Gastrocnemius medialis (tissue), 4 donors: ENCODE measurements at regions of chr1 and their contacts with region 1.

Region 1: DNA sequence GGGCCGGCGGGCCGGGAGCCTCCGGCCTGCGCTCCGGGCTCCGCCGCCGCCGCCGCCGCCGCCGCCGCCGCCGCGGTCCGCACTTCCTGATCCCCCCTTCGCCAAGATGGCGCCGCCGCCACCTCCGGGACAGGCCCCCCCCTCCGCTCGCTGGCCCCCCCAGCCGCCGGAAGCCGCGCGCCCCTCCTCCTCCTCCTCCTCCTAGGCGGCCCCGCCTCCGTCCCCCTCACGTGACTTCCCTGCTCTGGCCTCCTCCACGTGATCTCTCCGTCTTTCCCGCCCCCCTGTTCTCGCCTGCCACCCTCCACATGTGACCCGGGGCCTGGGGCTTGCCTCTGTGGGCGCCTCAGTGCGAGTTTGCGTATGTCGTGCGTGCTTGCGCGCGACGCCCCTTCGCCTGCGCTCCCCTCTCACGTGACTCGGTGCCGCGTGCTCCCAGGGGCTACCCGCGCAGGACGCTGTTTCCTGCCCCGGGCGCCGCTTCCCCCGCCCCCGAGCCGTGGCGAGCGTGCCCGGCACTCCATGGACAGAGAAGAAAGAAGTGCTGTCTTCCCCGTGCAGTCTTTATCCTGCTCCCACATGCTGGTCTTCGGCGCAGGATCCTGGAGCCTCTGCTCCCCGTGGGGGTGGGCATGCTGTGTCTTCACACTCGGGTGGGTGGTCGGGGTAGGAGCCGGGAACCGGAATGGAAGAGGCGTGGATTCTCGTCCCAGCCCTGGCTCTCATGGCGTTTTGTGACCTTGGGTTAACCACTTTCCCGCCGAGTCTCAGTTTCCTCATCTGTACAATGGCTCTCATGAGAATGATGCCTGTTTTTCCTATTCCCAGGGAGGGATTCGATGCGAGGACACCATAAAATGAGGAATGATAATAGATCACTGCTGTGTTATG is at the start of gene UBE2Q1:
- DNase-seq: peak; percentile 100
- ATAC-seq: peak; percentile 87 to 89
- H3K4me3 ChIP-seq: peak within 1 kb of the TSS; percentile 66 to 90 (median 76)
- H3K27ac ChIP-seq: peak within 1 kb of the TSS; percentile 94 to 98 (median 97)
- H3K4me1 ChIP-seq: peaks cover 29 to 31% of the 10 kb centered on the region in 2 donors
- H3K27me3 ChIP-seq: no peaks in the 10 kb centered on the region
- CTCF ChIP-seq: peak in 1 of 5 experiments; percentile 35
- POLR2A ChIP-seq: peak; percentile 79 to 86
- total RNA-seq, gene UBE2Q1: 18.8 to 42.8 (median 24.1) TPM

Region 2: DNA sequence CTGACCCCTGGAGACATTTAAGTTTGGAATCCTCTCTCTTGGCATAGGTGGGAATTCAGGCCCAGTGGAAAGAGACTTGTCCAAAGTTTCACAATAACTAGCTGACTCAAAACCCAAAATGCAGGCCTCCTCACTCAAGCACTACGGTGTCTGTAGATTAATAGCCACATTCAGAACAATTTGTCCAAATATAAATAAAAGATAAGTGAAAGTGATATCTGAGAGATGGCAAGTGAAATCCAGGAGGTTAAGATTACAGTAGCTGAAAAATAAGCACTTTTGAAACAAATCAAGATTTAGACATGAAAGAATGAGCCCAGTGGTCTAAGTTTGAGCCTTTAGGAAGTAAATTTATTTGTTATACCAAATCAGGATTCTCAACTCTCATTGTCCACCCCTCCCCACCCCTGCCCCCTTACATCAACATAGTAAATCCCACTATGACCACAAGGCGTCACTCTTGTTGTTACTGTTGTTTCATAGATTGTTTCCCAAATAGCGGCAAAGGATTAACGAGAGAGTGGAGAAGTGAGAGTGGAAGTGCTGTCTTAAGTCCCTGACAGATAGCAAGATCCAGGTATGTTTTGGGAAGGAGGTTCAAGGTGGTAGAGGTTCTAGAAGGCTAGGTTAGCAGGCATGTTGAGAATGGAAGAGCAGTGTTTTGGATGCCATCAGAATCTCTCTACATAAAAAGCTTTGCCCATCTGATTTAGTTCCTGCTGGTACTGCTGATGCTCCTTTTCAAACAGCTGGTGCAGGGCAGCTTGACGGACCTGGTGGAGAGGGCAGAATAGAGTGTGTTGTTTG is 359.9 kb before region 1 on chr1:
- in situ Hi-C with region 1: no loop called
- intact Hi-C with region 1: loop called (anchors 10 kb)
- DNase-seq: no peak
- ATAC-seq: peak; percentile 50 to 59
- H3K4me3 ChIP-seq: no peak overlapping the region
- H3K27ac ChIP-seq: peak overlapping the region; percentile 86 to 93 (median 90)
- H3K4me1 ChIP-seq: peaks cover 7 to 13% of the 10 kb centered on the region in 2 donors
- H3K27me3 ChIP-seq: no peaks in the 10 kb centered on the region
- CTCF ChIP-seq: peak in 3 of 5 experiments; percentile 39 to 58 (median 51)
- POLR2A ChIP-seq: no peak

Region 3: GRCh38 chr1:154627257-154628120 is 68.7 kb after region 1 on chr1:
- in situ Hi-C with region 1: no loop called
- intact Hi-C with region 1: loop called (anchors 2 kb)
- DNase-seq: peak; percentile 71 to 80
- ATAC-seq: peak; percentile 79 to 83
- H3K4me3 ChIP-seq: peak overlapping the region; percentile 91 to 100 (median 95)
- H3K27ac ChIP-seq: peak overlapping the region; percentile 82 to 89 (median 84)
- H3K4me1 ChIP-seq: peaks cover 13 to 19% of the 10 kb centered on the region in 2 donors
- H3K27me3 ChIP-seq: no peaks in the 10 kb centered on the region
- CTCF ChIP-seq: no peak
- POLR2A ChIP-seq: no peak

Region 4: GRCh38 chr1:154870115-154870571 is 311.3 kb after region 1 on chr1 and contains the start of gene KCNN3:
- in situ Hi-C with region 1: no loop called
- intact Hi-C with region 1: loop called (anchors 2 kb)
- DNase-seq: peak; percentile 90 to 95
- ATAC-seq: peak; percentile 85 to 87
- H3K4me3 ChIP-seq: peak within 1 kb of the TSS; percentile 52 to 71 (median 66)
- H3K27ac ChIP-seq: peak within 1 kb of the TSS; percentile 91 to 99 (median 96)
- H3K4me1 ChIP-seq: peaks cover 32 to 41% of the 10 kb centered on the region in 2 donors
- H3K27me3 ChIP-seq: no peaks in the 10 kb centered on the region
- CTCF ChIP-seq: peak in 1 of 5 experiments; percentile 7
- POLR2A ChIP-seq: peak; percentile 92 to 96
- total RNA-seq, gene KCNN3: 5.0 to 30.0 (median 20.8) TPM

Region 5: DNA sequence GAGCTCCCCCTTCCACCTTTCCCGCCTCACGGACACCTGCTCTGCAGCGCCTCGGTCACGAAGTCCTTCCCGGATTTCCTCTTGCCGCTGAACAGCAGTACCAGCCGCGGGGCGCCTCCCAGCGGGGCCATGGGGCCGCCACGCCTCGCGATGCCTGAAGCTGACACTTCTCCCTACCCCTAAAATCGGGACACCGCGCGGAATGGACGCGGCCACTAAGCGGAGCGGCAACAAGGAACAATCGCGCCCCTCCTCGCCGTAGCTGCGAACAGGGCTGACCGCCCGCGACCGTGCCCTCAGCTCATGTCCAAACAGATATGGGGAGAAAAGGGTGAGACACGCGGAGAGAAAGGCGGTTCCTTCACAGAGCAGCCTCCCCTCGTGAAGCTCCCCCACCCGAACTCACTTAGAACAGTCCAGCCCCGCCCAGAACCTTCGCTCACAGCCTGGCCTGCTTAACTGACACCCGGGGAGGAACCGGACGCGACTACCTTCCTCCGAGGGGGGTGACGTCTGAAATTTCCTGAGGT is 377.8 kb after region 1 on chr1 and contains the start of gene PMVK:
- in situ Hi-C with region 1: no loop called
- intact Hi-C with region 1: loop called (anchors 2 kb)
- DNase-seq: peak; percentile 92 to 95
- ATAC-seq: peak; percentile 94 to 96
- H3K4me3 ChIP-seq: peak within 1 kb of the TSS; percentile 65 to 97 (median 83)
- H3K27ac ChIP-seq: peak within 1 kb of the TSS; percentile 93 to 99 (median 98)
- H3K4me1 ChIP-seq: peaks cover 11 to 15% of the 10 kb centered on the region in 2 donors
- H3K27me3 ChIP-seq: no peaks in the 10 kb centered on the region
- CTCF ChIP-seq: peak in 3 of 5 experiments; percentile 36 to 55 (median 42)
- POLR2A ChIP-seq: peak in 1 of 2 donors; percentile 30
- total RNA-seq, gene PMVK: 4.6 to 7.6 (median 6.1) TPM

Region 6: GRCh38 chr1:154982897-154983648 is 424.3 kb after region 1 on chr1 and contains the start of gene FLAD1:
- in situ Hi-C with region 1: no loop called
- intact Hi-C with region 1: no loop called
- DNase-seq: peak; percentile 98 to 99
- ATAC-seq: peak; percentile 100
- H3K4me3 ChIP-seq: peak within 1 kb of the TSS; percentile 83 to 86 (median 84)
- H3K27ac ChIP-seq: peak within 1 kb of the TSS; percentile 78 to 91 (median 89)
- H3K4me1 ChIP-seq: peaks cover 14 to 27% of the 10 kb centered on the region in 2 donors
- H3K27me3 ChIP-seq: no peaks in the 10 kb centered on the region
- CTCF ChIP-seq: peak in 1 of 5 experiments; percentile 27
- POLR2A ChIP-seq: peak; percentile 44 to 56
- total RNA-seq, gene FLAD1: 26.6 to 36.8 (median 31.7) TPM

Region 7: DNA sequence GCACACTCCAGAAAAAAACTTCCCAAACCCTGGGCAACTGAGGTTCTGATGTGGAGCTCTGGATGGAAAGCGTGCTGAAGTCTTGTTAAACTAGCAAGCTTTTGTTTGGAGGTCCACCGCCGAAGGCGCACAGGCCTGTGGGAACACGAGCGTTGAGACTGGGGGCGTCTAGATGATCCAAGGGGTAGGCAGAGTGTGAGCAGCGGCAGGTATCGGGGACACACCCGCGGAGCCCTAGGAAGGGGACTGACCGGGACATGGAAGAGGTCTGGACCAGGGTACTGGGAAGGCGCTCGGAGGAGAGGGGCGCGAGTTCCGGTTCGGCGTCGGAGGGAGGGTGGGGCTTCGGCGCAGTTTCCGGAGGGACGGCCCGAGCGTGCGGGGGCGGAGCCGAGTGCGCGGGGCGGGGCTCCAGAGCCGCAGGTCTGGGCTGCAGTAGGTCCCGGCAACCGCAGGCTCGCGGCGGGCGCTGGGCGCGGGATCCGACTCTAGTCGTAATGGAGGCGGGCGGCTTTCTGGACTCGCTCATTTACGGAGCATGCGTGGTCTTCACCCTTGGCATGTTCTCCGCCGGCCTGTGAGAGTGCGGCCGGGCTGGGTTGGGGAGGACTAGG is 576.7 kb after region 1 on chr1 and contains the start of gene SLC50A1:
- in situ Hi-C with region 1: no loop called
- intact Hi-C with region 1: loop called (anchors 5 kb)
- DNase-seq: peak; percentile 87 to 93
- ATAC-seq: peak; percentile 69 to 78
- H3K4me3 ChIP-seq: peak within 1 kb of the TSS; percentile 82 to 93 (median 87)
- H3K27ac ChIP-seq: peak within 1 kb of the TSS; percentile 96 to 100 (median 98)
- H3K4me1 ChIP-seq: peaks cover 55 to 61% of the 10 kb centered on the region in 2 donors
- H3K27me3 ChIP-seq: no peaks in the 10 kb centered on the region
- CTCF ChIP-seq: peak; percentile 43 to 64 (median 59)
- POLR2A ChIP-seq: peak; percentile 90 to 92
- total RNA-seq, gene SLC50A1: 3.5 to 11.4 (median 8.2) TPM